CD4-positive, alpha-beta memory T cell (primary cell): ENCODE measurements at regions of chr9 and their contacts with region 1.

Region 1: DNA sequence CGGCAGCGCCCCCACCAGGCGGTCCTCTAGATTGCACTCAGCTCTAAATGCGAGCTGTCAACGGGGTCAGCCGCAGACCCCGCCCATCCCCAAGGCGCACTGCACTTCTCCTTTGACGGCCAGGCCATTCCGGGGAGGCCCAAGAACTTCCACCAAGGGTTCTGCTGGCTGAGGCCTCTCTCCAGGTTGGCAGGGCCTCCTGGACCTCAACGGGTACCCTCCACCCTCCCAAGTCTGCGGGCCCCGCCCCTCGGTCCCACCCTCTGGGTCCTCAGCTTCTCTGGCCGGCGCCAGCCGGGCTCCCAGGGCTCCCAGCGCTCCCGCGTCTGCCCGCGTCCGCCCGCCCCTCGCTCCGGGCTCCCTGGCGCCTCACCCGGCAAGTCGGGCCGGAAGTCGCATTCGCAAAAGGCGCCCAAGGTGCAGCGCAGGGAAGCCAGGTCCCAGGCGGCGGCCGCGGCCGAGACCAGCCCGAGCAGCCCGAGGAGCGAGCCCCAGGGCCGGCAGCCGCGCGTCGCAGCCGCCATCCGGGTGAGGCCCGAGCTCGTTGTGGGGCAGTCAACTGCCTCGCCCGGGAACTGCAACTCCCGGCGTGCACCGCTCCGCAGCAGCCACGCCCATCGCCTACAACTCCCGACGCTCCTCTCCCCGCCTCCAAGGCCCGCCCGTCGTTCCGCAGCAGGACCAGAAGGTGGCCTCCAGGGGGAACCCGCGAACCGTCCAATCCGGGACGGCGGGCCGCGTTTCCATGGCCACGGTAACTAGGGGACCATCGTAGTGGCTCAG is at the start of gene TOR2A:
- DNase-seq: peak; percentile 98 to 100 (median 99)
- H3K4me3 ChIP-seq: peak within 1 kb of the TSS; percentile 30 to 74
- H3K4me3 Mint-ChIP-seq: peak within 1 kb of the TSS; percentile 85 to 98 (median 92)
- H3K27ac ChIP-seq: peak within 1 kb of the TSS; percentile 80
- H3K27ac Mint-ChIP-seq: peak within 1 kb of the TSS; percentile 88 to 99 (median 97)
- H3K4me1 ChIP-seq: peaks cover 18% of the 10 kb centered on the region
- H3K4me1 Mint-ChIP-seq: peaks cover 7 to 27% (median 18%) of the 10 kb centered on the region in 4 donors
- H3K27me3 ChIP-seq: no peaks in the 10 kb centered on the region
- H3K27me3 Mint-ChIP-seq: no peaks in the 10 kb centered on the region
- total RNA-seq, gene TOR2A: 14.3 to 18.4 TPM

Region 2: GRCh38 chr9:127450830-127451724 is 283.9 kb before region 1 on chr9 and contains the starts of genes LRSAM1 and RPL12:
- CTCF ChIA-PET with region 1: no interaction called
- POLR2A ChIA-PET with region 1: interaction called, 10 read pairs
- intact Hi-C with region 1: loop called (anchors 2 kb)
- DNase-seq: peak; percentile 96 to 99 (median 97)
- H3K4me3 ChIP-seq: peak within 1 kb of the TSS; percentile 86 to 97
- H3K4me3 Mint-ChIP-seq: peak within 1 kb of the TSS; percentile 95 to 99 (median 96)
- H3K27ac ChIP-seq: peak within 1 kb of the TSS; percentile 83
- H3K27ac Mint-ChIP-seq: peak within 1 kb of the TSS; percentile 95 to 98 (median 96)
- H3K4me1 ChIP-seq: peaks cover 29% of the 10 kb centered on the region
- H3K4me1 Mint-ChIP-seq: peaks cover 27 to 62% (median 36%) of the 10 kb centered on the region in 4 donors
- H3K27me3 ChIP-seq: no peaks in the 10 kb centered on the region
- H3K27me3 Mint-ChIP-seq: no peaks in the 10 kb centered on the region
- total RNA-seq, gene LRSAM1: 30.5 to 31.3 TPM
- total RNA-seq, gene RPL12: 1,622 to 1,664 TPM

Region 3: DNA sequence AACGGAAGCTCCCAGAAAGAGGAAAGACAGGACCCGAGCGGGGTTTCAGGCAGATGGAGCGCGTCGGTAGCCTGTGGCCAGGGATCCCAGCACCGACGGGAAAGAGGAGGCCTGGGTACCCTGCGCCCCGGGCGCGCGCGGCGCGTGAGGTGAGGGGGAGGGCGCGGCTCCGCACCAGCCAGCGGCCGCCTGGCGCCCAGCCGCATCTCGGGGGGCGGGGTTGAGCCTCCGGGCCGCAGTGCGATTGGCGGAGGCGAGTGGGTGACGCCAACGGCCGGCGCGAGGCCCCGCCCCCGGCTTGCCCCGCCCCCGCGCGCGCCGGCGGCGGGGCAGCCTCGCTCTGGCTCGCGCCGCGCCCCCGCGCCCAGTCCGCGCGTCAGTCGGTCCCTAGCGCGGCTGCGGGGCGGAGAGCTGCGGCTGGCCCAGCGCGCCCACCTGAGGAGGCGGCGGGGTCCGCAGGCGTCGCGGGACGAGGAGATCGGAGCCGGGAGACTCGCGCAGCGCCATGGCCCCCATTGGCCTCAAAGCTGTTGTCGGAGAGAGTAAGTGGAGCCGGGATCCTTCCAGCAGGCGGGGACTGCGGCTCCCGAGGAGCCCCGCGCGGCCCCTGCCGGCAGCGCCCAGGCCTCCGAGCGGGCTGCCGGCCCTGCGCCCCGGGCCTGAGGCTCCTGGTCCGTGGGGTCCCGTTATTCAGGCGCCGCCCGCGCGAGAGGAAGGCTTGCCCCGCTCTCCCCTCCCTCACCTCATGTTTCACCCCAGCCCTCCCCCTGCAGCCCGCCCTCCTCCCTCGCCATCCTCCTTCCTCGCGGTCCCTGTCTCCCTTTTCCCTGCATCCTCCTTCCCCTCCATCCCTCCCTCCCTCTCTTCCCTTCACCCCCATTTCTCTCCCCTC is 122.8 kb before region 1 on chr9 and contains the start of gene STXBP1:
- CTCF ChIA-PET with region 1: interaction called, 11 read pairs
- POLR2A ChIA-PET with region 1: interaction called, 13 read pairs
- intact Hi-C with region 1: loop called (anchors 1 kb)
- DNase-seq: peak; percentile 81 to 88 (median 85)
- H3K4me3 ChIP-seq: peak within 1 kb of the TSS; percentile 54 to 74
- H3K4me3 Mint-ChIP-seq: peak within 1 kb of the TSS; percentile 88 to 98 (median 96)
- H3K27ac ChIP-seq: peak within 1 kb of the TSS; percentile 24
- H3K27ac Mint-ChIP-seq: peak within 1 kb of the TSS; percentile 59 to 93 (median 87)
- H3K4me1 ChIP-seq: peaks cover 32% of the 10 kb centered on the region
- H3K4me1 Mint-ChIP-seq: peaks cover 23 to 45% (median 32%) of the 10 kb centered on the region in 4 donors
- H3K27me3 ChIP-seq: peaks cover 4% of the 10 kb centered on the region
- H3K27me3 Mint-ChIP-seq: peaks cover 5 to 14% of the 10 kb centered on the region in 2 donors
- total RNA-seq, gene STXBP1: 19.9 to 20.9 TPM

Region 4: DNA sequence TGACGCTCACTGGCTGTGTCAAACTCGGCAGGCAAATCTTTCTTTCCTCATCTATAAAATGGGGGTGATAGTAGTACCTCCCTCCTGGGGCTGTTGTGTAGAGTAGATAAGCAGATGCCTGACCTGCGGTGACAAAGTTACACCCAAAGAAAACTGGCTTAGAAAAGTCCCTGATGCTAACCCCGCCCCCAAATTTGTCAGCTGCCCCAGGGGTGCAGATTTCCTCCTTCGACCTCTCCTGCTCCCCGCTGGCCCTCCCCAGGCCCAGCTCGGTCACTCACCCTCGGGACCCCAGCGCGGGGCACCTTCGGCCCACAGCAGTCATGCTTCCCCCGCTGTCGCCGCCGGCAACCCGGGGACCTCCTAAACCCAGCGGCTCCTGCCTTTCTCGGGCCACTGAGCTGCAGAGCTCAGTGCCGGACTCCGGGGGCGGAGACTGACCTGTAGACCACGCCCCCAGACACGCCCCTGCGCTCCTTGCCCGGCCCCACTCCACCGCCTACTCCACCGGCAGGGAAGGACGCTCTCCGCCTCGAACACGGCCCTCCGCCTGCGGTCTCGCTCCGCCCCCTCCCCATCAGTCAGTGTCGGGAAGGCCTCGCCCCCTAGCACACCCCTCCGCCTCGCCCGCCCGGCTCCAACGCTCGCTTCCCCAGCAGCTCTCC is 36.1 kb after region 1 on chr9:
- CTCF ChIA-PET with region 1: interaction called, 17 read pairs
- POLR2A ChIA-PET with region 1: interaction called, 40 read pairs
- intact Hi-C with region 1: loop called (anchors 1 kb)
- DNase-seq: peak; percentile 92 to 96 (median 95)
- H3K4me3 ChIP-seq: peak overlapping the region; percentile 50 to 78
- H3K4me3 Mint-ChIP-seq: peak overlapping the region; percentile 78 to 92 (median 88)
- H3K27ac ChIP-seq: peak overlapping the region; percentile 97
- H3K27ac Mint-ChIP-seq: peak overlapping the region; percentile 92 to 99 (median 98)
- H3K4me1 ChIP-seq: peaks cover 91% of the 10 kb centered on the region
- H3K4me1 Mint-ChIP-seq: peaks cover 41 to 78% (median 61%) of the 10 kb centered on the region in 4 donors
- H3K27me3 ChIP-seq: no peaks in the 10 kb centered on the region
- H3K27me3 Mint-ChIP-seq: no peaks in the 10 kb centered on the region

Region 5: DNA sequence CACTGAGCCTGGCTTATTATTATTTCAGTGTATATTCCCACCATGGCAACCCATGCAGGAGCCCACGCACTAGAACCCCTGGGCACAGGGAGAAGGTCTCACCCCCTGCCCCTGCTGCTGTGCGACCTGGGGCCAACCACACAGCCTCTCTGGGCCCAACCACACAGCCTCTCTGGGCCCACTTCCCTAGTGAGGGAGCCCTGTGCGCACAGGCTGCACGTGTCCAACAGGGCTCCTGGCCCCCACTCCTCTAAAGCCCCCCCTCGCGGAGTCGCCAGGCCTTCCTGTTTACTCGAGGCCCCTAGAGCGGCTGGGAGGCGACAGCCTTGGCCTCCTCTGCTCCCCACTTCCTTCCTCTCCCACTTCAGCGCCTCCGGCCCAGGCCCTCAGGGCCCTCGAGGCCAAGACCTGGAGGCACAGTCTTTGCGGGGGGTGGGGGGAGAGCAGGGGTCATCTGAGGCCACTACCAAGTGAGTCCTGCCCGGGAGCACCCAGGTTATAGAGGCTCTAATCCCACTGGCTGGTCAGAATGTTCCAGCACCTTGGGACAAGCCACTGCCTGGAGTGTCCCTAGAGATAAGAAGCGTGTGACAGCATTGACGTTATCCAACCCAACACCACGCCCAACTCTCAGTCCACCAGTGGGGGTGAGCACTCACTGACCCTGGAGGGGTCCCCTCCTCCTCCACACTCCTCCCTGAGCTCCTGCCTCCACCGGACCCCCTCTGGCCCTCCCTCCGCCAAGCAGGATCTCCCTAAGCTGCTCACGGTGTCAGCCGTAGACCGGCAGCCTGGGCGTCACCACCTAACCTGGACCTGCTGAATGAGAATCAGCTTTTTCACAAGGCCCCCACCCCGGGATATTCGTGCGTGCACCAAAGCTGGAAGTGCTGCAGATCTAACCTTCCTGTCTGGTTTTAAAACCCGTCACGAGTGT is 127.4 kb after region 1 on chr9:
- CTCF ChIA-PET with region 1: interaction called, 26 read pairs
- POLR2A ChIA-PET with region 1: no interaction called
- intact Hi-C with region 1: no loop called
- DNase-seq: peak; percentile 35 to 68 (median 45)
- H3K4me3 ChIP-seq: no peak overlapping the region
- H3K4me3 Mint-ChIP-seq: peak overlapping the region in 7 of 8 donors; percentile 5 to 79 (median 52)
- H3K27ac ChIP-seq: peak overlapping the region; percentile 59
- H3K27ac Mint-ChIP-seq: peak overlapping the region; percentile 87 to 97 (median 91)
- H3K4me1 ChIP-seq: peaks cover 45% of the 10 kb centered on the region
- H3K4me1 Mint-ChIP-seq: peaks cover 31 to 54% (median 39%) of the 10 kb centered on the region in 4 donors
- H3K27me3 ChIP-seq: no peaks in the 10 kb centered on the region
- H3K27me3 Mint-ChIP-seq: no peaks in the 10 kb centered on the region

Region 6: DNA sequence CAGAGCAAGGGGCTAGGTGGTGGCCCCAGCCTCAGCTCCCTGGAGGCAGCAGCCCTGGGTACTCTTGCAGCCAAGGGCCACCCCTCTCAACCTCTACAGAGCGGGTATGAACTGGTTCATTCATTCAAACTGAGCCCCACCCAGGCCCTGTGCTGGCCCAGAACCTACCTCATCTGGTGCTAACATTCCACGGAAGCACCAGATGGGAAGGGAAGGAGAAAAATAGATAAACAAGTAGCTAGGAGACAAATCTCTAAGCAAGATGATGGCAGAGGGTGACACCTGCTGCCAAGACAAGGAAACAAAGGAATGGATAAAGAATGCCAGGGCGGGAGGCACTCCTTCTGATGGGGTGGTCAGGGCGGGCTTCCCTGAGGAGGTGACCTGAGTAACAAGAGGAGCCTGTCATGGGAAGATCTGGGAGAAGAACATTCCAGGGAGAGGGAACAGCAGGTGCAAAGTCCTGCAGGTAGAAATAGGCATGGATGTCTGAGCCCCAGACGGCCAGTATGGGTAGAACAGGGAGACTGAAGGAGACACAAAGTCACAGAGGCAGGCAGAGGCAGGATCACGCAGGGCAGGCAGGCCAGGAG is 175.8 kb after region 1 on chr9:
- CTCF ChIA-PET with region 1: interaction called, 30 read pairs
- POLR2A ChIA-PET with region 1: interaction called, 15 read pairs
- intact Hi-C with region 1: loop called (anchors 1 kb)
- DNase-seq: no peak
- H3K4me3 ChIP-seq: no peak overlapping the region
- H3K4me3 Mint-ChIP-seq: peak overlapping the region in 1 of 8 donors; percentile 46
- H3K27ac ChIP-seq: no peak overlapping the region
- H3K27ac Mint-ChIP-seq: peak overlapping the region; percentile 67 to 96 (median 82)
- H3K4me1 ChIP-seq: peaks cover 38% of the 10 kb centered on the region
- H3K4me1 Mint-ChIP-seq: peaks cover 11 to 53% (median 29%) of the 10 kb centered on the region in 4 donors
- H3K27me3 ChIP-seq: no peaks in the 10 kb centered on the region
- H3K27me3 Mint-ChIP-seq: no peaks in the 10 kb centered on the region

Region 7: GRCh38 chr9:127955294-127956035 is 220.5 kb after region 1 on chr9:
- CTCF ChIA-PET with region 1: no interaction called
- POLR2A ChIA-PET with region 1: no interaction called
- intact Hi-C with region 1: no loop called
- DNase-seq: peak; percentile 72 to 94 (median 73)
- H3K4me3 ChIP-seq: peak overlapping the region in 1 of 2 donors; percentile 2
- H3K4me3 Mint-ChIP-seq: peak overlapping the region; percentile 43 to 80 (median 80)
- H3K27ac ChIP-seq: peak overlapping the region; percentile 57
- H3K27ac Mint-ChIP-seq: peak overlapping the region; percentile 86 to 97 (median 93)
- H3K4me1 ChIP-seq: peaks cover 97% of the 10 kb centered on the region
- H3K4me1 Mint-ChIP-seq: peaks cover 48 to 92% (median 76%) of the 10 kb centered on the region in 4 donors
- H3K27me3 ChIP-seq: no peaks in the 10 kb centered on the region
- H3K27me3 Mint-ChIP-seq: no peaks in the 10 kb centered on the region

Region 8: DNA sequence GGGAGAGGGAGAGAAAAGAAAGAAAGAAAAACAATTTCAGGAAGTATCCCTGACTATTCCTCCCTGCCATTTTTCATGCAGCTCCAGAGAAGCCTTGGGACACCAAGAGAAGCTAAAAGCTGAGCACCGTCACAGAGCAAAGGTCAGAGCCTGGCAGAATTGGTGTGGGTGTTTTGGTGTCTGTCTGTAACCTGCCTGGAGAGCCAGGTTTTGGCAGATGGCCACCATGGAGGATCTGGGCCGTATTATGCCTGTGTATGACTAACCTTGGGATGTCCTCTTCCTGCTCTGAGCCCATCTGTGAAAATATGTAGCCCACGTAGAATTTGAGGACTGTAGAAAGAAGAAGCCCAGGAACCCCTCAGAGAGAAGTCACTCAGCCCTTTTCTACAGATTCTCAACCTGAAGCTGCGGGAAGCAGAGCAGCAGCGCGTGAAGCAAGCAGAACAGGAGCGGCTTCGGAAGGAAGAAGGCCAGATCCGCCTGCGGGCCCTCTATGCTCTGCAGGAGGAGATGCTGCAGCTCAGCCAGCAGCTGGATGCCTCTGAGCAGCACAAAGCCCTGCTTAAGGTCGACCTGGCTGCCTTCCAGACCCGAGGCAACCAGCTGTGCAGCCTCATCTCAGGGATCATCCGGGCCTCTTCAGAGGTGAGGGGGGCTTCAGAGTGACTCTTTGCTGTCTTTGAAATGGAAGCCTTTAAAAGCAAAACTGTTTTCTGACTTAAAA is 788.4 kb after region 1 on chr9:
- CTCF ChIA-PET with region 1: no interaction called
- POLR2A ChIA-PET with region 1: no interaction called
- intact Hi-C with region 1: no loop called
- DNase-seq: no peak
- H3K4me3 ChIP-seq: no peak overlapping the region
- H3K4me3 Mint-ChIP-seq: no peak overlapping the region
- H3K27ac ChIP-seq: no peak overlapping the region
- H3K27ac Mint-ChIP-seq: peak overlapping the region in 3 of 7 donors; percentile 22 to 73 (median 42)
- H3K4me1 ChIP-seq: no peaks in the 10 kb centered on the region
- H3K4me1 Mint-ChIP-seq: peaks cover 0 to 4% (median 2%) of the 10 kb centered on the region in 4 donors
- H3K27me3 ChIP-seq: no peaks in the 10 kb centered on the region
- H3K27me3 Mint-ChIP-seq: no peaks in the 10 kb centered on the region